ENCODE measurements at regions of chr3 and their contacts with region 1.

Region 1: GRCh38 chr3:124063197-124063909 is 71.4 kb upstream of the ROPN1 start:
- DNase-seq: peak; percentile 40
- H3K4me3 ChIP-seq: no peak overlapping the region
- CTCF ChIP-seq: no peak

Region 2: DNA sequence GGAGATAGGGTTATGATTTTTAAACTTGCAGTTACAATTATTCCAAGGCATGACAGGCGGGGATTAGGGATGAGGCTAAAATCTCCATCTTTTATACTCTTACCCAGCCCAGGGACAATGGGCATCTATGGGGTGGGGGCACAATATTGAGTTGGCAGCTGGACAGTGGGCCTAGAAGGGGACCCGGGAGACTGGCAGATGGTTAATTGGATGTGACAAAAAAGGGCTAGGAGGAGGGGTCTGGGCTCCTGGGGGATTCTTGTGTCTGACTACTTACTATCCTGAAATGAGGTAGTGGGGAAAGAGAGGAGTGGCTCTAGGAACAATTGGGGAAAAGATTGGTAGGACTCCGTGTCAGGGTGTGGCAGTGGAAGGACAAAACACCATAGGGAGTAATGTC is 18.4 kb before region 1 on chr3:
- CTCF ChIA-PET with region 1: interaction called, 10 read pairs
- POLR2A ChIA-PET with region 1: no interaction called
- DNase-seq: no peak
- H3K4me3 ChIP-seq: no peak overlapping the region
- CTCF ChIP-seq: no peak

Region 3: DNA sequence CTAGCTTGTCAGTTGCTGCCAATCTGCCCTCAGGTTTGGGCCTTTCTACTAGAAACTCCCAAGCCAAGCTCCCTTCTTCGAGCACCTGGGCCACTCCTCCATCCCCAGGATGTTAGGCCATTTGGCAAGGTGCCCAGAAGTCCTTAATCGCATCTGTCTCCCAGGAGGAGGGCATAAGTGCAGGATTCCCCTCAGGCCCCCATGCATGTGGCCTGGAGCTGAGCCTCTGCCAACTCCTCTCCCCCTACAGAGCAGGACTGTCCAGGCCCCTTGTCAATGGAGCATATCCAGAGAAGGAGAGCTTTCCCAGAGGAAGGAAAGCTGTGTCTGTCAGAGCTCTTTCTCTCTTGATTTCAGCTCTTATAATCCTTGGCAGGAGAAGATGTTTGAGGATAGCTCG is 111.1 kb after region 1 on chr3:
- CTCF ChIA-PET with region 1: no interaction called
- POLR2A ChIA-PET with region 1: no interaction called
- DNase-seq: no peak
- H3K4me3 ChIP-seq: no peak overlapping the region
- CTCF ChIP-seq: no peak

Region 4: GRCh38 chr3:124229420-124229819 is 166.1 kb after region 1 on chr3:
- CTCF ChIA-PET with region 1: no interaction called
- POLR2A ChIA-PET with region 1: no interaction called
- DNase-seq: no peak
- H3K4me3 ChIP-seq: no peak overlapping the region
- CTCF ChIP-seq: no peak

Measured in AG04449 (cell line).